GM13977 (cell line): ENCODE measurements at regions of chr7 and their contacts with region 1.

Region 1: DNA sequence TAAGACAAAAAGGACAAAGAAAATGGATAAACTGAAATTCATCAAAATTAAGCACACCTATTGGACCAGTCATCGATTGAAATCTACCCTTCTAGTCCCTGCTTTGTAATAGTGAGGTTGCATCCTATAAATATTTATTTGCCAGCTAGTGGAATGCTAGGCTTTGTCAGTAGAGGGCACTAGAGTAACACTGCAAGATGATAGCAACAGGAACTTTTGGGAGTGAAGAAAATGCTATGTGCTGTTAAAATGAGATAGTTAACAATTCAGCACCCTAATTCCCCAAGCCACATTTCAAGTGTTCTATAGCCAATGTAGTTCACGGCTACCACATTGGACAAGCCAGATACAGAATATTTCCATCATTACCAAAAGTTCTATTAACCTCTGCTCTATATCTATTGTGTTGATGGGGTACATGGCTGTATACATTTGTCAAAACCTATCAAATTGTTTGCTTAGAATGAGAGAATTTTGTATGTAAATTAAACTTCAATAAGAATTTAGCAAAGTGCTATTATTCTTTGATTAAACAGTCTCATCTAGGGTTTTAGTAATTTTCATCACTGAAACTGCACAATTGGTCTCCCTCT is 69.8 kb downstream of the LSMEM1 start:
- DNase-seq: peak; percentile 70
- CTCF ChIP-seq: peak; percentile 89

Region 2: DNA sequence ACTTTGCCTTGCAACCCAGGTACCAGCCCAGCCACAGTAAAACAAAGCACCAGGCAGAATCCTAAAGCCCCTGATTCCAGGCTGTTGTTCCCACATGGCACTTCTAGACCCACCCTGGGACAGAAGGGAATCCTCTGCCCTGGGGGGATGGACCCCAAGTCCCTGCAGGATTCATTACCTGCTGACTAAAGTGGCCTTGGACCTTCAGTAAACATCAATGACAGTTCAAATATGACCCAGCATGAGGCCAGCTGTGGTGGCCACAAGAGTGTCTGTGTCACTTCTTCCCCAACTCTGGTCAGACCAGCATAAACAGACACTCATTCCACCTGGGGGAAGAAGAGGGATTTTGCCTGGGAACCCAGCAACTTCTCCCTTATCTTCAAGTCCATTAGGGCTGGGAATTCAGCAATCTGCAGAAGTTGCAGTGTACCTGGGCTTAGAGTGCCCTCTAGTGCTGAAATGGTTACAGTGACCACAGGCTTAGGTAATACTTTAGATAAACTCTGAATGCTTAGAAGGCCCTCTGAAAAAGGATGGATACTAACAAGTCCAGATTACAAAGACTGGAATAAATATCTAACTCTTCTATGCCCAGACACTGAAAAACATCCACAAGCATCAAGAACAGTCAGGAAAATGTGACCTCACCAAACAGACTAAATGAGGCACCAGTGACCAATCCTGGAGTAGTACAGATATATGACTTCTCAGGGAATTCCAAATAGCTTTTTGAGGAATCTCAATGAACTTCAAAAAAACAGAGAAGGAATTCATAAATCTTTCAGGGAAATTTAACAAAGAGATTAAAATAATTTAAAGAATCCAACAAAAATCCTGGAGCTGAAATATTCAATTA is 348.1 kb after region 1 on chr7:
- in situ Hi-C with region 1: loop called (anchors 25 kb)
- DNase-seq: peak; percentile 39
- CTCF ChIP-seq: peak; percentile 81

Region 3: DNA sequence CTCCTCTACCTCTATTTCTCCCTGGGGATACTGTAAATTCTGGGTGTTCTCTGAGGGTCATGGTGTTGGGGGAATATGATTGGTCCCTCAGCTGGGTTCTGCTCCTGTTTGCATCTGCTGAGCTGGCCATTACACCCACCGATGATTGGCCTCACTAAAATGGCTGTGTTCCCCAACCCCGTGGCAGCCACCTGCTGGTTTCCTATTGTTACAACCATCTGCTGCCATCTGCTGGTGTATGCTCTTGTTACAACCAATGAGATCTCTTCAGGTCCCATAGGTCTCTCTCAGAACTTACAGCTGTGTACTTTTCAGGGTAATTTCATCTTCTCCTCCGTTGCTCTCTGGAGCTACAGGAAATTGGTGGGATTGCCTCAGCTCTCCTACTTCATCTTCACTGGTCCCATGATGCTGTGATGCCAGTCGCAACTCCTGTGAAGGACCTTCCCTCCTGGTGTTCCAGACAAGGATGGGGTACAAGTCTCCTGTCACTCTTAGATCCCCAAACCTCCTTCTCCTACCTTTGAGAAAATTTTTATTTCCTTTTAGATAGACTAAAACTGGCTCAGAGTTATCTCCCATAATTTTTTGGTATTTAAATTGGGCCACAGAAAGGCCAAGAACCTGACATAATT is 871.2 kb after region 1 on chr7:
- in situ Hi-C with region 1: loop called (anchors 25 kb)
- DNase-seq: peak; percentile 38
- CTCF ChIP-seq: peak; percentile 84